B cell (primary cell): ENCODE measurements at regions of chr17 and their contacts with region 1.

Region 1: GRCh38 chr17:33009636-33010035 is 18.0 kb downstream of the SPACA3 start:
- DNase-seq: no peak
- ATAC-seq: no peak
- H3K4me3 ChIP-seq: no peak overlapping the region
- H3K4me3 Mint-ChIP-seq: no peak overlapping the region
- H3K27ac ChIP-seq: no peak overlapping the region
- H3K27ac Mint-ChIP-seq: no peak overlapping the region
- H3K4me1 ChIP-seq: no peaks in the 10 kb centered on the region
- H3K4me1 Mint-ChIP-seq: no peaks in the 10 kb centered on the region
- H3K27me3 ChIP-seq: no peaks in the 10 kb centered on the region
- H3K27me3 Mint-ChIP-seq: peaks cover 24% of the 10 kb centered on the region
- CTCF ChIP-seq: no peak

Region 2: GRCh38 chr17:32985050-32985756 is 24.4 kb before region 1 on chr17:
- CTCF ChIA-PET with region 1: no interaction called
- POLR2A ChIA-PET with region 1: no interaction called
- intact Hi-C with region 1: no loop called
- DNase-seq: no peak
- ATAC-seq: no peak
- H3K4me3 ChIP-seq: no peak overlapping the region
- H3K4me3 Mint-ChIP-seq: no peak overlapping the region
- H3K27ac ChIP-seq: no peak overlapping the region
- H3K27ac Mint-ChIP-seq: no peak overlapping the region
- H3K4me1 ChIP-seq: no peaks in the 10 kb centered on the region
- H3K4me1 Mint-ChIP-seq: peaks cover 3% of the 10 kb centered on the region
- H3K27me3 ChIP-seq: peaks cover 0 to 7% (median 0%) of the 10 kb centered on the region in 4 experiments
- H3K27me3 Mint-ChIP-seq: peaks cover 12% of the 10 kb centered on the region
- CTCF ChIP-seq: no peak

Region 3: GRCh38 chr17:32997753-32998632 is 11.6 kb before region 1 on chr17:
- CTCF ChIA-PET with region 1: interaction called, 10 read pairs
- POLR2A ChIA-PET with region 1: no interaction called
- intact Hi-C with region 1: no loop called
- DNase-seq: peak; percentile 70
- ATAC-seq: peak; percentile 54
- H3K4me3 ChIP-seq: no peak overlapping the region
- H3K4me3 Mint-ChIP-seq: no peak overlapping the region
- H3K27ac ChIP-seq: no peak overlapping the region
- H3K27ac Mint-ChIP-seq: no peak overlapping the region
- H3K4me1 ChIP-seq: peaks cover 5% of the 10 kb centered on the region in 2 donors
- H3K4me1 Mint-ChIP-seq: peaks cover 4% of the 10 kb centered on the region
- H3K27me3 ChIP-seq: peaks cover 0 to 9% (median 1%) of the 10 kb centered on the region in 4 experiments
- H3K27me3 Mint-ChIP-seq: peaks cover 26% of the 10 kb centered on the region
- CTCF ChIP-seq: peak; percentile 91

Region 4: GRCh38 chr17:33106525-33107165 is 97.0 kb after region 1 on chr17:
- CTCF ChIA-PET with region 1: no interaction called
- POLR2A ChIA-PET with region 1: no interaction called
- intact Hi-C with region 1: no loop called
- DNase-seq: no peak
- ATAC-seq: no peak
- H3K4me3 ChIP-seq: no peak overlapping the region
- H3K4me3 Mint-ChIP-seq: no peak overlapping the region
- H3K27ac ChIP-seq: no peak overlapping the region
- H3K27ac Mint-ChIP-seq: no peak overlapping the region
- H3K4me1 ChIP-seq: no peaks in the 10 kb centered on the region
- H3K4me1 Mint-ChIP-seq: no peaks in the 10 kb centered on the region
- H3K27me3 ChIP-seq: peaks cover 0 to 4% (median 0%) of the 10 kb centered on the region in 4 experiments
- H3K27me3 Mint-ChIP-seq: peaks cover 24% of the 10 kb centered on the region
- CTCF ChIP-seq: no peak